ENCODE measurements at regions of chr1 and their contacts with region 1.

Region 1: DNA sequence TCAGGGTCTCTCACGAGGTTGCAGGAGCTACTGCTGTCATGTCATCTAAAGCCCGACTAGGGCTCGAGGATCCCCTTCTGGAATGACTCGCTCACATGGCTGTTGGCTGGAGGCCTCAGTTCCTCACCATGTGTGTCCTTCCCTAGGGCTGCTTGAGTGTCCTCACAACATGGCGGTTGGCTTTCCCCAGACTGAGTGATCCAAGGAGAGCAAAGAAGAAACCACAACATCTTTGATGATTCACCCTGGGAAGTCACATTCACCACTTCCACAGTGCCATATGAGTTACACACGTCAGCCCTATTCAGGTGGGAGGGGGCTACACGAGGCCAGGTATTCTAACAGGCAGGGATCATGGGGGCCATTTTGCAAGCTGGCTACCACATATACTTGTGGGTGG is 64.9 kb downstream of the FHAD1 start:
- DNase-seq: no peak
- ATAC-seq: no peak
- H3K4me3 ChIP-seq: no peak overlapping the region
- H3K27ac ChIP-seq: no peak overlapping the region
- H3K4me1 ChIP-seq: peaks cover 0 to 4% (median 2%) of the 10 kb centered on the region in 3 donors
- H3K27me3 ChIP-seq: no peaks in the 10 kb centered on the region
- CTCF ChIP-seq: no peak

Region 2: GRCh38 chr1:15007842-15008241 is 304.0 kb before region 1 on chr1:
- intact Hi-C with region 1: no loop called
- DNase-seq: no peak
- ATAC-seq: no peak
- H3K4me3 ChIP-seq: no peak overlapping the region
- H3K27ac ChIP-seq: no peak overlapping the region
- H3K4me1 ChIP-seq: no peaks in the 10 kb centered on the region
- H3K27me3 ChIP-seq: no peaks in the 10 kb centered on the region
- CTCF ChIP-seq: no peak

Region 3: GRCh38 chr1:15501208-15502032 is 189.5 kb after region 1 on chr1:
- intact Hi-C with region 1: loop called in 1 of 3 experiments (anchors 10 kb)
- DNase-seq: peak; percentile 65 to 86 (median 74)
- ATAC-seq: peak; percentile 44 to 84 (median 79)
- H3K4me3 ChIP-seq: no peak overlapping the region
- H3K27ac ChIP-seq: no peak overlapping the region
- H3K4me1 ChIP-seq: peaks cover 0 to 8% (median 0%) of the 10 kb centered on the region in 3 donors
- H3K27me3 ChIP-seq: no peaks in the 10 kb centered on the region
- CTCF ChIP-seq: peak; percentile 30 to 67 (median 58)

Measured in pancreas (tissue), 10 donors.